ENCODE measurements at regions of chr10 and their contacts with region 1.

Region 1: DNA sequence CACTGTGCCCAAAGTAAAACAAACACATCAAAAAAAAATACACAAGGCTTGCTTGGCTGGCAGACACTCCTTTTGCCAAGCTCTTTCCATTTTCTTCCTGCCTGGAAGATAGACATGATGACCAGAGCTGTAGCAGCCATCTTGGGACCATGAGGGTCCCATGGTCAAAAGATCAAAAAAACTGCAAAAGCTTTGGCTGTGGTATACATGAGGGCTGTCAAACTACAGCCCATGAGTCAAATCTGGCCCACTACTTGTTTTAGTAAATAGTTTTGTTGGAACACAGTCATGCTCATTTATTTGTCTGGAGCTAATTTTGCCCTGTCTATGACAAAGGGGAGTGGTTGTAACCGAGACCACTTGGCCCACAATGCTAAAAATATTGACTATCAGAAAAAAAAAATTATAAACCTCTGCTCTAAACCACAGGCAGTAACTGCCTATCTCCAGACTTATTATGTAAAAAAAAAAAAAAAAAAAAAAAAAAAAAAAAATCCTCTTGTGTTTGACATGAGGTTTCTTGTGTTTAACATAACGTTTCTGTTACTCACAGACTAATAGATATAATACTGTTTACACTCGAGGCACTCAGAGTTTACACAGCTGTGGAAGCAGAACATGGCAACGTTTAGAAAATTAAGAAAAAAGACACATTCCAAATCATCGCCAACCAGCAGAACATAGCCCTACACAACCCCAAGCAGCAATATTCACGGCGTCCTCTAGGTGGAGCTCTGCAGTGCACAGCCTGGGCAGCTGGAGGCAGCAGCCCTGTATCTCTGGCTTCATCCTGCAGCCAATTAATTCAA is 36.9 kb downstream of the ASB13 start:
- DNase-seq: peak; percentile 93
- ATAC-seq: peak; percentile 74
- H3K4me3 Mint-ChIP-seq: peak overlapping the region; percentile 44
- H3K27ac Mint-ChIP-seq: peak overlapping the region; percentile 82
- H3K4me1 Mint-ChIP-seq: peaks cover 22% of the 10 kb centered on the region
- H3K27me3 Mint-ChIP-seq: peaks cover 7% of the 10 kb centered on the region

Region 2: DNA sequence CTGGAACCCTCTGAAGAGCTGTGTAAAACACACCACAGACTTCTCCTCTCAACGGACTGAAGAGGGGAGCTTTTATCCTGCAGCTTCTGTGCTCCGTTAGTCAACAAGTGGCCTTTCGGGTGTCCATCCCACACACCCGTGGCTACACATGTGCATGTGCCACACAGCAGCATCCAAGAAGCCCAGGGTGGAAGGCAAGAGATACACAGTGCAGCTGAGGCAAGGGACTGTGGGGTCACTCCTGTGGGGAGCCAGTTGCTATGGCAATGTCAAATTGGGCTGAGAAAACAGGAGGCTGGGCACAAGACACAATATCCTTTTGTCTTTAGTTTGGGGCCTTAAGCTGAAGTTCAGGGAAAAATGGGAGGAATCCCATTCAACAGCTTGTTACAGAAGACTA is 188.4 kb before region 1 on chr10:
- CTCF ChIA-PET with region 1: interaction called, 178 read pairs
- POLR2A ChIA-PET with region 1: interaction called, 3 read pairs
- intact Hi-C with region 1: no loop called
- DNase-seq: no peak
- ATAC-seq: no peak
- H3K4me3 Mint-ChIP-seq: no peak overlapping the region
- H3K27ac Mint-ChIP-seq: no peak overlapping the region
- H3K4me1 Mint-ChIP-seq: peaks cover 26% of the 10 kb centered on the region
- H3K27me3 Mint-ChIP-seq: no peaks in the 10 kb centered on the region

Region 3: GRCh38 chr10:5548527-5549223 is 80.8 kb before region 1 on chr10:
- CTCF ChIA-PET with region 1: interaction called, 10 read pairs
- POLR2A ChIA-PET with region 1: no interaction called
- intact Hi-C with region 1: loop called in 1 of 2 experiments (anchors 5 kb)
- DNase-seq: peak; percentile 85
- ATAC-seq: peak; percentile 95
- H3K4me3 Mint-ChIP-seq: no peak overlapping the region
- H3K27ac Mint-ChIP-seq: no peak overlapping the region
- H3K4me1 Mint-ChIP-seq: peaks cover 35% of the 10 kb centered on the region
- H3K27me3 Mint-ChIP-seq: peaks cover 2% of the 10 kb centered on the region

Region 4: DNA sequence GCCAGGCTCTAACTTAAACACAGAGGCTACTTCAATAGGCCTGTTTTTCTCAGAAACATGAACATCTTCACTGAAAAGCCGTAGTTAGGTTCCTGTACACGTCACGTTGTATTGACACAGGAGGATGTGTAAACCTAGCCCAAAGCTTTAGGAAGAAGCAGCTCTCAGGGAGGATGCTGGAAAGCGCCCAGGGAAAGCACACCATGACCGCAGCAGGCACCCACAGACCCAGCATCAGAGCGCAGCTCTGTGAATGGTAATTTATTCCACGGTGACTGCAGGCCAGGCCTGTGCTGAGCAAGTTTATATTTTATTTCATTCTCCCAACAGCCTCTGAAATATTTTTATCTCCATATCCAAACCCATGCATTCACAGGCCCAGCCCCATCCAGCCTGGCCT is 14.2 kb before region 1 on chr10:
- CTCF ChIA-PET with region 1: interaction called, 14 read pairs
- POLR2A ChIA-PET with region 1: no interaction called
- intact Hi-C with region 1: no loop called
- DNase-seq: no peak
- ATAC-seq: no peak
- H3K4me3 Mint-ChIP-seq: no peak overlapping the region
- H3K27ac Mint-ChIP-seq: no peak overlapping the region
- H3K4me1 Mint-ChIP-seq: no peaks in the 10 kb centered on the region
- H3K27me3 Mint-ChIP-seq: no peaks in the 10 kb centered on the region

Region 5: DNA sequence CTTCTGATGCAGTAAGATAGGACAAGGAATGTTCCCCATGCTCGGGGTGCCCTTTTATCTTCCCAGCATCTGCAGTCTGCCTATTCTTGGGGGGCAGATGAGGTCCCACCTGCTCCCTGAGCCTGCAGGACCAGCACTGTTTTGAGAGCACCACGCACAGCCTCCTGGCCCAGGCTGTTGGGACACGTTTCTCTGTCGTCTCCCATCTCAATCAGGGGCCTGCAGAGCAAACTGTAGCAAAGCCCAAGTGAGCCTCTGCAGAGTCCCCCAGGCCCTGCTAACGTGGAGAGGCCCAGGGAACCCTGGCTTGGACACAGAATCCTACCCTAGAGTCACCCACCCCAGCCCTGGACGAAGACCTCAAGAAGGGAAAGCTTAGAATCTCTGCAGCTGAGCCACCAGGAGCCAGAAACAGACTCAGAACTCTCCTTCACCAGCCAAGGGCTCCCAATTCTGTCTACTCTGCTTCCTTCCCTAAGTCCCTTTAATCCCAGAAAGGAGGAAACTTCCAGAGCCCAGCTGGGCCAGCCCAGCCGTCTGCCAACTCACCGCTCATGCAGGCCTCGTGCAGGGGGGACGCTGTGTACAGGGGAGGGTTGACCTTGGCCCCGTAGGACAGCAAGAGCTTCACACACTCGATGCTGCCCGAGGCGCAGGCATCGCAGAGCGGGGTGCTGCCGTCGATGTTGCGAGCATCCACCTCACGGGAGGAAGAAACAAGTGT is 21.3 kb after region 1 on chr10:
- CTCF ChIA-PET with region 1: no interaction called
- POLR2A ChIA-PET with region 1: no interaction called
- intact Hi-C with region 1: no loop called
- DNase-seq: no peak
- ATAC-seq: no peak
- H3K4me3 Mint-ChIP-seq: no peak overlapping the region
- H3K27ac Mint-ChIP-seq: no peak overlapping the region
- H3K4me1 Mint-ChIP-seq: peaks cover 17% of the 10 kb centered on the region
- H3K27me3 Mint-ChIP-seq: no peaks in the 10 kb centered on the region

Region 6: DNA sequence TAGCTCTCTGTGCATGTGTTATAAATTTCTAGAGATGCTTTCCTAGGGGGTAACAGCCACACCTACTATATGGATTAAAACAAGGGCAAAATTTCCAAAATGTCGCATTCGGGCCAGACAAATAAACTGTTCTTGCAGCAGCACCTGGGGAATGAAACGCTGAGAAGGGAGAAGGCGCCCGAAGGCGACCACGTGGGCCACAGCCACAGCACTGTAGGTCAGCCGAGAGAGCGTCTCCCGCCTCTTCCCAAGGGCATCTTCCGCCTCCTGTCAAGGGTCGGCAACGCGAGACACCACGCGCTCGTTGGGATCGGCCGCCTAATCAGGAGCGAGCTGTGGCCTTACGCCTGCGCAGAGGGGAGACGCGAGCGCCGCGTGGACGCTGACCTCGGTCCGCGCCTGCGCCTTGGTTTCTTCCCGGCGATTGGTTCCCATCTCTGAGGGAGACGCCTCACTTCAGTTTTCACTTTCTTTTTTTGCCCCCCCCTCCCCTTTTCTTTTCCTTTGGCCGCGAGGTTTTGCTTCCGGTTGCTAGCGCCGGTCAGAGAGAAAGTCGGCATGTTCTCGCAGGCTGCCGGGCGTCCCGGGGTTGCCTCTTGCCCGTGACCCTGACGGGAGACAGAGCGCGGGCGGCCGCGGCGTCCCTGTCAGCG is 54.9 kb after region 1 on chr10 and contains the start of gene TASOR2:
- CTCF ChIA-PET with region 1: no interaction called
- POLR2A ChIA-PET with region 1: interaction called, 4 read pairs
- intact Hi-C with region 1: loop called in 1 of 2 experiments (anchors 1 kb)
- DNase-seq: peak; percentile 98
- ATAC-seq: peak; percentile 91
- H3K4me3 Mint-ChIP-seq: peak within 1 kb of the TSS; percentile 96
- H3K27ac Mint-ChIP-seq: peak within 1 kb of the TSS; percentile 92
- H3K4me1 Mint-ChIP-seq: peaks cover 56% of the 10 kb centered on the region
- H3K27me3 Mint-ChIP-seq: no peaks in the 10 kb centered on the region
- total RNA-seq, gene TASOR2: 41.9 to 45.4 TPM

Region 7: DNA sequence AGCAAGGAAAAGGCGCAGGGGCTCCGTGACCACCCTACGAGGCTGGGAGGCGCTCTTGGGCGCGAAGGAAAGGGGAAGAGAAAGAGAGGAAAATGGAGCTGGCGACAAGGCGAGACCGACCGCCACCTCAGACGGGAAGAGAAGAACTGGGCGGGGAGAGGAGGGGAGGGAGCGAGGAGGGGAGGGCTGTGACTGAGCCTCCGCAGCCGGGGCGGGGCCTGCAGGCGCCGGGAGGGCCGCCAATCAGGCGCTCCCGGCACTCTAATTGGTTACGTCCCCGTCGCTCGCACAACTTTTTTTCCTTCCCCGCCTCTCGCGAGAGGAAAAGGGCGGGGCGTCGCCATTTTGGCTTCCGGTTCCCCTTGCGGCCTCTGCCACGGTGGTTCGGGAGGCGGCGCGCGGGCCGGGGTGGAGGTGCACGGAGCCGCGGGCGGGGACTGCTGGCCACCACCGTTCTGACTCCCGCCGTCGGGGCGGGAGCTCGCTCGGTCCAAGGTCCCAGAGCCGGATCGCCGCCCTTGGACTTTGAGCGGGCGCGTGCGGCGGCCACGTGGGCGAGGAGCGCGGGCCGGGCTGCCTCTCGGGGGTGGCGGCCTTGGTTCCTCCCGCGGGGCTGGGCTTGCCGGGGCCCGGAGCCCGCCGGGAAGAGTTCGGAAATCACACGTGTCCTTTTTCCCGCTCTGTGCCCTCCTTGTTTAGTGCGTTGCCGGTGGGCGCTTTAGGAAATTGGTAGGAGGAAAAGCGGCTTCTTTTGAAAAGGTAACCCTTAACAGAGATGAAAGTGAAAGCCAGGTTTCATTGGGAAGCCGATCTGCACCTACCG is 184.0 kb after region 1 on chr10 and contains the start of gene GDI2:
- CTCF ChIA-PET with region 1: interaction called, 4 read pairs
- POLR2A ChIA-PET with region 1: no interaction called
- intact Hi-C with region 1: loop called in 1 of 2 experiments (anchors 2 kb)
- DNase-seq: peak; percentile 98
- ATAC-seq: peak; percentile 94
- H3K4me3 Mint-ChIP-seq: peak within 1 kb of the TSS; percentile 92
- H3K27ac Mint-ChIP-seq: peak within 1 kb of the TSS; percentile 98
- H3K4me1 Mint-ChIP-seq: peaks cover 60% of the 10 kb centered on the region
- H3K27me3 Mint-ChIP-seq: no peaks in the 10 kb centered on the region
- total RNA-seq, gene GDI2: 276 to 290 TPM

Region 8: DNA sequence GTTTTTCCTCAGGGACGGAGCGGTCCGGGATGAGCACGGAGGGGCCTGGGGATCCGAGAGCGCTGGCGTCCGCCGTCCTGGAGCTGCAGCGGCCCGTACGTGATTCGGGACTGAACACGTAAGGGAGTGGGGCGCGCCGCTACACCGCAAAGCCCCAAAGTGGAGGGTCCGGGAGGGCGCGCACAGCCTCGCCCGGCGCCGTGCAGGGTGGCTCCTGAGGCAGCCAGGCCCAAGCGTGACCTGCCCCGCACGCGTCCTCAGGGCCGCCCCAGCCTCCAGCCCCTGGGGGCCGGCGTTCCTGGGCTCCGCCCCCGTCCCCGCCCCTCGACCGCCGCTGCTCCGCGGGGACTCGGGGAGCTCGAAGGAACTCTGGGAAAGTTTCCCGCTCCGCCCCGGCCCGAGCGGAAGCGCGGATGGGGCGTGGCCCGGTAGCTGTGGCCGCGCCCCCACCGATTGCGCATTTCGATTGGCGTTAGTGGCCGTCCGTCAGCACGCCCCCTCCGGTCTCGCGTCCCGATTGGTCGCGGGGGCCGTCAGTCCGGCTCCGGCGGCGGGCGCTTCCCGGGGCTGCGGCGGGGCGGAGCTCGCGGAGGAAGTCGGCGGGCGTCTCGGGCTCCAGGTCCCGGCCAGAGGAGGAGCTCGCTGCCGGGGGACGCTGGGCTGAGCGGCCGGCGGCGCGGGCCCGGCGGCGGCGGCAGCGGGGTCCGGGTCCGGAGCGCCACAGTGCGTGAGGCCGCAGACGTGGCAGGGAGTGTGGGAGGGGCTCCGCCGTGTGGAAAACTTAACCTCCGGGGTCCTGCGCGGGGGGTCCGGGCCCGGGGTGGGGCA is 260.3 kb after region 1 on chr10 and contains the starts of genes ANKRD16 and FBH1:
- CTCF ChIA-PET with region 1: interaction called, 4 read pairs
- POLR2A ChIA-PET with region 1: no interaction called
- intact Hi-C with region 1: loop called in 1 of 2 experiments (anchors 5 kb)
- DNase-seq: peak; percentile 99
- ATAC-seq: peak; percentile 87
- H3K4me3 Mint-ChIP-seq: peak within 1 kb of the TSS; percentile 90
- H3K27ac Mint-ChIP-seq: peak within 1 kb of the TSS; percentile 84
- H3K4me1 Mint-ChIP-seq: peaks cover 53% of the 10 kb centered on the region
- H3K27me3 Mint-ChIP-seq: no peaks in the 10 kb centered on the region
- total RNA-seq, gene ANKRD16: 7.5 to 8.3 TPM
- total RNA-seq, gene FBH1: 53.3 to 56.2 TPM

Measured in activated CD4-positive, alpha-beta T cell treated with anti-CD3 and anti-CD28 coated beads for 36 hours (primary cell).